ENCODE measurements at regions of chr20 and their contacts with region 1.

Region 1: DNA sequence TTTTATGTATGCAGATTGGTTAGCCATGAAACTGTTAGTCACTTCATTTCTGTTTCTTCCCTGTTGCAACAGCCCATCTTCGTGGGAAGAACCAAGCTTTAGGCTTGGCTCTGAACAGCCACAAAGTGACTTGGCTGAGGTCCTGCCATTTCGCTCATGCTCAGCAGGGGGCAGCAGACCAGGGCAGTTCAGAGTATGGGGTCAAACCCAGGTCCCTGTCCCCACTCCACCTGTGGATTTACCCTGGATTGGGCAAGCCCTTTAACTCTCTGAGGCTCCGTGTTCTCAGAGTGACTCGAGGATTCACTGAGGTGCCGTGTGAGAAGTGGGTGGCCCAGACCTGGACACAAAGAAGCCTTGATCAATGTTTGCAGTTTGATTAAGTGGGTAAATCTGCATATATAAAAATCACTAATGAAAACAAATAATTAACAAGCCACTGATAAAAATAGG is 19.8 kb upstream of the MAP1LC3A start:
- DNase-seq: peak; percentile 77
- H3K4me3 ChIP-seq: no peak overlapping the region
- H3K27ac ChIP-seq: no peak overlapping the region; a peak in 1 of 4 replicates
- H3K4me1 ChIP-seq: no peaks in the 10 kb centered on the region
- H3K27me3 ChIP-seq: no peaks in the 10 kb centered on the region
- CTCF ChIP-seq: peak; percentile 85
- EP300 ChIP-seq: no peak
- RAD21 ChIP-seq: peak; percentile 59

Region 2: GRCh38 chr20:34516247-34517113 is 22.2 kb before region 1 on chr20 and contains the start of gene DYNLRB1:
- CTCF ChIA-PET with region 1: interaction called, 11 read pairs
- POLR2A ChIA-PET with region 1: interaction called, 6 read pairs
- DNase-seq: peak; percentile 93
- H3K4me3 ChIP-seq: peak within 1 kb of the TSS; percentile 73 to 92
- H3K27ac ChIP-seq: peak within 1 kb of the TSS; percentile 92
- H3K4me1 ChIP-seq: peaks cover 0 to 9% of the 10 kb centered on the region in 2 experiments; a peak in 2 of 4 replicates
- H3K27me3 ChIP-seq: no peaks in the 10 kb centered on the region
- CTCF ChIP-seq: no peak
- EP300 ChIP-seq: no peak
- RAD21 ChIP-seq: no peak
- polyA plus RNA-seq, gene DYNLRB1: 298 and 402 TPM in 2 replicates

Region 3: DNA sequence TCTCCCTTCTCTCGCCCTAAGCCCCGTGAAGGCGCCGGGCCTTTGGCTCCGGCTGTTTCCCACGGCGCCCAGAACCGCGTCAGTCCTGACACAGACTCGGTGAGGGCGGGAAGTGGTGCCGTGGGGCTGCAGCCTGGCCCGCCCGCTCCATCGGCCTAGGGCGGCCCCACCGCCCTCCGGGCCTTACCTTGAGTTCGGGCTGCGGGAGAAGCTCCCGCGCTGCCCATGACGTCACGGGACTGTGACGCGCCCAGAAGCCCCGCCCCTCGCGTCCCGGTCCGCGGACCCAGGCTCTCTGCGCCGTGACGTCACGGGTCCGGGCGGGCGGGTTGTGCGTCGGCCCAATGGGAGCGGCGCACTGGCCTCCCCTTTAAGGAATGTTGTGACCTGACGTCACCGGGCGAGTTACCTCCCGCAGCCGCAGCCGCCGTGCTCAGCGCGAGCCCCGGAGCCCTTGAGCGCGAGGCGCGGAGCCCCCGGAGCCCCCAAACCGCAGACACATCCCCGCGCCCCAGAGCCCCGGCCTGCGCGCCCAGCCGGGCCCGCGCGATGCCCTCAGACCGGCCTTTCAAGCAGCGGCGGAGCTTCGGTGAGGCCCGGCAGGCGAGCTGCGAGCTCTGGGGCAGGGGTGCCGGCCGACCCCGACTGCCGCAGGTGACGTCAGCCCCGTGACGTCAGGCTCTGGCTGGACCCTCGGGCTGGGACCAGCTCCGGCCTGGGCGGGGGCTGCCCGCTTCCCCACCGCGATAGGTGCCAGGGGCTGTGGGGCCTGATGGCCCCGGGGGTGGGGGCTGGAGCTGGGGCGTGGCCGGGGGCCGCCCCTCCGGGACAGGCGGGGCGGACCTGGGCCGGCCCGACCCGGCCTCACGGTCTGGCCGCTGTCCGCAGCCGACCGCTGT is 19.9 kb after region 1 on chr20 and contains the start of gene MAP1LC3A:
- CTCF ChIA-PET with region 1: interaction called, 17 read pairs
- POLR2A ChIA-PET with region 1: interaction called, 3 read pairs
- DNase-seq: peak; percentile 99
- H3K4me3 ChIP-seq: peak within 1 kb of the TSS; percentile 73 to 77
- H3K27ac ChIP-seq: peak within 1 kb of the TSS; percentile 45 to 61; a peak in 2 of 4 replicates
- H3K4me1 ChIP-seq: peaks cover 0 to 9% of the 10 kb centered on the region in 2 experiments; a peak in 1 of 4 replicates
- H3K27me3 ChIP-seq: no peaks in the 10 kb centered on the region
- CTCF ChIP-seq: no peak
- EP300 ChIP-seq: no peak
- RAD21 ChIP-seq: no peak
- polyA plus RNA-seq, gene MAP1LC3A: 17.2 and 24.9 TPM in 2 replicates

Region 4: DNA sequence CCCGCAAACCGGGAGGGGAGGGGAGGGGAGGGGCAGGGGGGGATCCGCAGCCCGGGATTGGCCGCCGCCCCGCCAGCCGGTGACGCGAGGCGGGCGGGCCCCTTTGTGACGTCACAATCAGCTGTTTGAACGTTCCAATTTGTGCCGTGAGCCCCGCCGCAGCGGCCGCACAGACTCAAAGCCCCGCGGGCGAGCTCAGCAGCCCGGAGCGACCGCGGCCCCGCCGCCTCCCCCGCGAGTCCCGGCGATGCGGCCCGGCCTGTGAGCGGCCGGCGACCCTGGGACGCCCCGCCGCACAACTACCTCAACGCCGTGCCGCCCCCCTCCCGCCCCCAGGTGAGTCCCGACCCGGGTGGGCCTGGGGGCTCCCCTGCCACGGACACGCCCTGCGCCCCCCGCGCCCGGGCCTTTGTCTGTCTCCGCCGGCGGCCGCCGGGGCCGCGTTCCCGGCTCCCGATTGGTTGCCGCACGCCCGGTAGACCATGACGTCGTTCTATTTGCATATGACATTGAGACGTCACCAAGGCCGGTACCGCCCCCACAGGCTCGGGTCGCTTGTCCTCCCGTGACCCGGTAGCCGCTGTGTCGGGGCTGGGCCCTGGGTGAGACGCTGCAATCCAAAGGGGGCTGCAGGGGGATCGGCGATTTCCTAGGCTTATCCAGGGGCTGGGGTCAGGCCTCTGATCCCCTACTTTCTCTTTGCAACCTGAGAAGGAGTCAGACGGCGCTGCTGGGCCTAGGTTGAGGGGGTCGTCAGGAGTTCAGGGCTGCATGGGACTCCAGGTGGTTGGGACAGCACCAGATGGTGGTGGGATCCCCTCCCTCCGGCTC is 165.7 kb after region 1 on chr20 and contains the start of gene TP53INP2:
- CTCF ChIA-PET with region 1: interaction called, 12 read pairs
- POLR2A ChIA-PET with region 1: no interaction called
- DNase-seq: peak; percentile 96
- H3K4me3 ChIP-seq: peak within 1 kb of the TSS; percentile 84 to 92
- H3K27ac ChIP-seq: peak within 1 kb of the TSS; percentile 86 to 94
- H3K4me1 ChIP-seq: peaks cover 8 to 21% of the 10 kb centered on the region in 2 experiments; a peak in 3 of 4 replicates
- H3K27me3 ChIP-seq: no peaks in the 10 kb centered on the region
- CTCF ChIP-seq: no peak
- EP300 ChIP-seq: no peak
- RAD21 ChIP-seq: no peak
- polyA plus RNA-seq, gene TP53INP2: 4.9 and 6.4 TPM in 2 replicates

Measured in SK-N-SH (cell line).